ENCODE measurements at regions of chr14 and their contacts with region 1.

Region 1: DNA sequence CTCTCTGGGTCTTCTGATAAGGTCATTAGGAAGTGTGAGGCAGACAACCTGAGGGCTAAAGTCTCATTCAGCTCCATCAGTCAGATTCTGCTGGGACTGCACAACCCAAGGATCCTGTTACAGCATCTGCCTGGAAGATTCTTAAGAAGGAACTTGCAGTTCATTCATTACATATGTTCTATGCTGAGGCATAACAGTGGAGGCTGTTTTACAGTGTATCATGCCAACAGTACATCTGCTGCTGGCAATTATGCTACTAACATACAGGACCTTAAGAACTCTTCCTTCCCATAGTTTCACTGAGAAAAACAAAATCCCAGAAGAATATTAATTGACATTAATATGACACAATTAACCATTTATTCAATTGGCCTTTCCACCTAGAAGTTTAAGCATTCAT is 968.6 kb downstream of the DIO2 start:
- DNase-seq: no peak
- H3K4me3 ChIP-seq: no peak overlapping the region
- H3K27ac ChIP-seq: no peak overlapping the region
- H3K4me1 ChIP-seq: no peaks in the 10 kb centered on the region
- H3K27me3 ChIP-seq: no peaks in the 10 kb centered on the region
- CTCF ChIP-seq: no peak
- POLR2A ChIP-seq: no peak

Region 2: GRCh38 chr14:79011091-79011919 is 231.4 kb before region 1 on chr14:
- intact Hi-C with region 1: loop called (anchors 10 kb)
- DNase-seq: peak; percentile 25
- H3K4me3 ChIP-seq: no peak overlapping the region
- H3K27ac ChIP-seq: no peak overlapping the region
- H3K4me1 ChIP-seq: no peaks in the 10 kb centered on the region
- H3K27me3 ChIP-seq: no peaks in the 10 kb centered on the region
- CTCF ChIP-seq: peak; percentile 37 to 80 (median 46)
- POLR2A ChIP-seq: no peak

Region 3: GRCh38 chr14:79193689-79194477 is 48.8 kb before region 1 on chr14:
- intact Hi-C with region 1: no loop called
- DNase-seq: no peak
- H3K4me3 ChIP-seq: no peak overlapping the region
- H3K27ac ChIP-seq: no peak overlapping the region
- H3K4me1 ChIP-seq: no peaks in the 10 kb centered on the region
- H3K27me3 ChIP-seq: no peaks in the 10 kb centered on the region
- CTCF ChIP-seq: no peak
- POLR2A ChIP-seq: no peak

Region 4: DNA sequence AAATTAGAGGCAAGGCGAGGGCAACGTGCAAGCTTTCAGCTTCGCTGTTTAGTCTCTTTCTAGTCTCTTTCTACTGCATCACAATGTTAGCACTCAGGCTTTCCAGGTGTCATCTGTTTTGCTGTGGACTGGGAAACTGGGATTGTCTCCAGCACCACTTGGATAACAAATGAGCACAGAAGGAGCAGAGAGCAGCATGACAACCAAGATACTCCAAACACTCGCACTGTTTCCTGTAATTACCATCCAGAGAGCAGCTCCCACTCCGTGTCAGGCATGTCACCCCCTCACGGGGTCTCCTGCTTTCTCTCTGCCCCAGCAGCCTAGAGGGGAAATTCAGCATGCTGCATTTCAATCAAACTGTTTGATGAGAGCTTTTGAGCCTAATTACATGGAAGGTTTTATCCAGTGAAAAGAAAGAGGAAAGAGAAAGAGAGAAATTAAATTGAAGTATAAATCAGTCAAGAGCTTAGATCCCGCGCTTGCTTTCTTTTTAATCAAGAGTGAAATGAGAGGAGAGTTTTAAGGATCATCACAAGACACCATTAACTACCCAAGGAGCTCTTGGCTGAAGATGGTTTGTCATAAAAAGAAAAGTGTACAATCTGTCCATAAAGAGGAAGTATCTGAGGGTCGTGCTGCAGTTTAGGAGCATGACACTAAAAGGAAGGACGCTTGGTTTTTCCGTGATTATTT is 51.0 kb after region 1 on chr14:
- intact Hi-C with region 1: no loop called
- DNase-seq: no peak
- H3K4me3 ChIP-seq: no peak overlapping the region
- H3K27ac ChIP-seq: no peak overlapping the region
- H3K4me1 ChIP-seq: no peaks in the 10 kb centered on the region
- H3K27me3 ChIP-seq: no peaks in the 10 kb centered on the region
- CTCF ChIP-seq: no peak
- POLR2A ChIP-seq: no peak